Activated CD4-positive, alpha-beta T cell treated with anti-CD3 and anti-CD28 coated beads for 36 hours (primary cell): ENCODE measurements at regions of chrX and their contacts with region 1.

Region 1: GRCh38 chrX:79182616-79183015 is 38.1 kb downstream of the GPR174 start:
- DNase-seq: peak; percentile 27
- ATAC-seq: peak; percentile 88
- H3K4me3 Mint-ChIP-seq: peak overlapping the region; percentile 0
- H3K27ac Mint-ChIP-seq: peak overlapping the region; percentile 23
- H3K4me1 Mint-ChIP-seq: peaks cover 57% of the 10 kb centered on the region
- H3K27me3 Mint-ChIP-seq: no peaks in the 10 kb centered on the region

Region 2: DNA sequence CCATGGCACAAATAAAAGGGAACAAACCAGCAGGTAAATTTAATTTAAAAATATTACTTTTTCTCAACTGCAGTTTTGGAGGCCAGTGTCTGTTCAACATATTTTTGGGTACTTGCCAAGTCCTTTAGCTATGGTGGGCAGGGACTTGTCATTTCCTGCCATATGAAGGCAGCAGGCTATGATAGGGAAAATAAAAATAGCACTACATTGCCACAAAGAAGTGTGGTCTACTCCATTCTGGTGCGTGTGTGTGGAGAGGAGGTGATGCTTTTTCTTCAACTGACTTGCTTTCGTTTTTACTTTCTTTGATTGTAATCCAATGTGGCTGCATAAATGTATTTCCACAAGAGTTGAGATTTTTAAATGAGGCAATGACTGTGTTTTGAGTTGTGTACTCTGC is 21.0 kb before region 1 on chrX:
- CTCF ChIA-PET with region 1: interaction called, 9 read pairs
- POLR2A ChIA-PET with region 1: no interaction called
- intact Hi-C with region 1: loop called (anchors 2 kb)
- DNase-seq: peak; percentile 50
- ATAC-seq: peak; percentile 77
- H3K4me3 Mint-ChIP-seq: peak overlapping the region; percentile 75
- H3K27ac Mint-ChIP-seq: peak overlapping the region; percentile 93
- H3K4me1 Mint-ChIP-seq: peaks cover 62% of the 10 kb centered on the region
- H3K27me3 Mint-ChIP-seq: no peaks in the 10 kb centered on the region

Region 3: DNA sequence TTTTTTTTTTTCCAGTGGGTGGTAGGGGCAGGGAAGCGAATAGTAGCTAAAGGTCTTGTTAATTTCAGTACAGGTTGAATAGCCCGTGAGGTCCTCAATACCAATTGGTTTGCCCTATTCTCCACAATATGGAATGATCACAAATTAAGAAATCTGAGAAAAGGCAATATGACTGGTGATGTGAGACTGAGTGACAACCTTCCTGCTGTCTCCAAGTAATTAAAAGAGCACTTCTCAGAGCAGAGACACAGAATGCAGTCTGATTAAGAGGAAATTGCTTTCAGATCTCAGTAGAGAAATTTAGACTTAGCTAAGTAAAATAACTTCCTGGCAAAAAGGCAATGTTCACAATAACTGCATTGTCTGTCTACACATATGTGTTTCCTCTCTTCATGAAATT is 15.2 kb before region 1 on chrX:
- CTCF ChIA-PET with region 1: interaction called, 9 read pairs
- POLR2A ChIA-PET with region 1: interaction called, 3 read pairs
- intact Hi-C with region 1: loop called in 1 of 2 experiments (anchors 2 kb)
- DNase-seq: no peak
- ATAC-seq: peak; percentile 38
- H3K4me3 Mint-ChIP-seq: peak overlapping the region; percentile 64
- H3K27ac Mint-ChIP-seq: peak overlapping the region; percentile 87
- H3K4me1 Mint-ChIP-seq: peaks cover 81% of the 10 kb centered on the region
- H3K27me3 Mint-ChIP-seq: no peaks in the 10 kb centered on the region